ENCODE measurements at regions of chr10 and their contacts with region 1.

Region 1: DNA sequence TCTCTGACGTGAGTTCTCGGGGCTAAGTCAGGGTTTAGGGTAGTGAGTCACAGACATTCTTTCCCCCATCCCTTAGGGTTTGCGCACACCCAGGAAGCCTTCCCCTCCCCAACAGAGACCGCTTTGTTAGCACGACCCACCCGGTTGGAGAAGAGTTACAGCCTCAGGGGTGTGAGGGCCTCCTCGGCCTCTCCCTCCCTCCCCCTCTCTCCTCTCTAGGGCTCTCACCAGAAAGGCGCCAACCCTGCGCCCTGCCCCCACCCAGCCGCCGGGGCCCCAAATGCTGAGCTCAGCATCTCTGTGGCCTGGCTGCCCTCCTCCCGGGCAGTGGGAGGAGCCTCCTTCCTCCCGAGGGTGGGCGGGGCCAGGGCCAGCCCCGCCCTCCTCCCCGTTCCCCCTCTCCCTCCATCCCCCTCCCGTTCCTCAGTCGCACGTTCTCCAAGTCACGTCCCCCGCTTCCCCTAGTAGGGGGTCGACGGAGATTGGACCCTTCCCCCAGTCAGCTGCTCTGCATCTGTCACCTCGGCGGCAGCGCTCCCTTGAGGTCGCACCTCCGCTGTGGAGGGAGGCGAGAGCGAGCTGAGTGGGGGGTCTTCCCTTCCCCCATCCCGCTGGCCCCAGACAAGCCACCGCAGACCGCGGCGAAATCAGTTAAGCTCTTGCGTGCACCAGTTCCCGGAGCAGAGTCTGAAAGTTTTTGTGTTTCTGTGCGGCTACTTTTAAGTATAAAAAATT is 13.0 kb upstream of the DDIT4 start:
- DNase-seq: peak; percentile 94 to 98
- H3K4me3 ChIP-seq: peak overlapping the region; percentile 61
- H3K4me3 Mint-ChIP-seq: peak overlapping the region; percentile 91
- H3K27ac Mint-ChIP-seq: peak overlapping the region; percentile 96
- H3K4me1 ChIP-seq: peaks cover 22% of the 10 kb centered on the region
- H3K4me1 Mint-ChIP-seq: peaks cover 29% of the 10 kb centered on the region
- H3K27me3 ChIP-seq: no peaks in the 10 kb centered on the region
- H3K27me3 Mint-ChIP-seq: no peaks in the 10 kb centered on the region
- CTCF ChIP-seq: peak in 1 of 2 experiments; percentile 31

Region 2: DNA sequence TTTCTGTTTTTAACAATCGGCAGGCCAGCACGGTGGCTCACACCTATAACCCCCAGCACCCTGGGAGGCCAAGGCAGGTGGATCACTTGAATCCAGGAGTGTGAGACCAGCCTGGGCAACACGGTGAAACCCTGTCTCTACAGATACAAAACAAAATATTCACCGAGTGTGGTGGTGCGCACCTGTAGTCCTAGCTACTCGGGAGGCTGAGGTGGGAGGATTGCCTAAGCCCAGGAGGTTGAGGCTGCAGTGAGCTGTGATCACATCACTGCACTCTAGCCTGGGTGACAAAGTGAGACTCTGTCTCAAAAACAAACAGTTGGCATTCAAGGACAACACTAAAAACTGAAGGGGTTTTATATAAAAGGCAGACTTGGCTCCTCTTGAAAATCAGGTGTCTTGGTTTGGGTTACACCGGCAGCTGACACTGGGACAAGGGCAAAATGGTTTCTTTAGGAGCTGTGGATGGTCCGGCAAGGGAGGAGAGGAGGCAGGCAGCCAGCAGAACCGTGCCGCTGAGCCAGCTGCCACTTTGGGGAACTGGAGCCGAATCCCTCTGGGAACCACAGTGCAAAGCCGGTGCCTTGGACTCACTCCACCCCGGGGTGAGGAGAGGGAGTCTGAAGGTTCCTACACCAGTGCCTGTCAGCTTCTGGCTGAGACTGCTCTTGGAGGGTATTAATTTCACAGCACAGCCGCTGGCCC is 244.0 kb before region 1 on chr10:
- CTCF ChIA-PET with region 1: no interaction called
- POLR2A ChIA-PET with region 1: no interaction called
- intact Hi-C with region 1: no loop called
- DNase-seq: no peak
- H3K4me3 ChIP-seq: no peak overlapping the region
- H3K4me3 Mint-ChIP-seq: no peak overlapping the region
- H3K27ac Mint-ChIP-seq: peak overlapping the region; percentile 34
- H3K4me1 ChIP-seq: peaks cover 30% of the 10 kb centered on the region
- H3K4me1 Mint-ChIP-seq: peaks cover 35% of the 10 kb centered on the region
- H3K27me3 ChIP-seq: no peaks in the 10 kb centered on the region
- H3K27me3 Mint-ChIP-seq: no peaks in the 10 kb centered on the region
- CTCF ChIP-seq: no peak

Region 3: GRCh38 chr10:72162978-72163377 is 97.8 kb before region 1 on chr10:
- CTCF ChIA-PET with region 1: no interaction called
- POLR2A ChIA-PET with region 1: interaction called, 10 read pairs
- intact Hi-C with region 1: no loop called
- DNase-seq: no peak
- H3K4me3 ChIP-seq: no peak overlapping the region
- H3K4me3 Mint-ChIP-seq: no peak overlapping the region
- H3K27ac Mint-ChIP-seq: no peak overlapping the region
- H3K4me1 ChIP-seq: peaks cover 11% of the 10 kb centered on the region
- H3K4me1 Mint-ChIP-seq: peaks cover 11% of the 10 kb centered on the region
- H3K27me3 ChIP-seq: no peaks in the 10 kb centered on the region
- H3K27me3 Mint-ChIP-seq: no peaks in the 10 kb centered on the region
- CTCF ChIP-seq: no peak

Region 4: GRCh38 chr10:72173635-72174296 is 87.0 kb before region 1 on chr10:
- CTCF ChIA-PET with region 1: no interaction called
- POLR2A ChIA-PET with region 1: no interaction called
- intact Hi-C with region 1: loop called (anchors 5 kb)
- DNase-seq: no peak
- H3K4me3 ChIP-seq: no peak overlapping the region
- H3K4me3 Mint-ChIP-seq: no peak overlapping the region
- H3K27ac Mint-ChIP-seq: no peak overlapping the region
- H3K4me1 ChIP-seq: peaks cover 24% of the 10 kb centered on the region
- H3K4me1 Mint-ChIP-seq: peaks cover 19% of the 10 kb centered on the region
- H3K27me3 ChIP-seq: no peaks in the 10 kb centered on the region
- H3K27me3 Mint-ChIP-seq: no peaks in the 10 kb centered on the region
- CTCF ChIP-seq: no peak

Region 5: GRCh38 chr10:72229261-72230251 is 31.2 kb before region 1 on chr10:
- CTCF ChIA-PET with region 1: interaction called, 5 read pairs
- POLR2A ChIA-PET with region 1: interaction called, 4 read pairs
- intact Hi-C with region 1: loop called (anchors 2 kb)
- DNase-seq: no peak
- H3K4me3 ChIP-seq: no peak overlapping the region
- H3K4me3 Mint-ChIP-seq: no peak overlapping the region
- H3K27ac Mint-ChIP-seq: no peak overlapping the region
- H3K4me1 ChIP-seq: no peaks in the 10 kb centered on the region
- H3K4me1 Mint-ChIP-seq: peaks cover 18% of the 10 kb centered on the region
- H3K27me3 ChIP-seq: no peaks in the 10 kb centered on the region
- H3K27me3 Mint-ChIP-seq: no peaks in the 10 kb centered on the region
- CTCF ChIP-seq: no peak

Region 6: DNA sequence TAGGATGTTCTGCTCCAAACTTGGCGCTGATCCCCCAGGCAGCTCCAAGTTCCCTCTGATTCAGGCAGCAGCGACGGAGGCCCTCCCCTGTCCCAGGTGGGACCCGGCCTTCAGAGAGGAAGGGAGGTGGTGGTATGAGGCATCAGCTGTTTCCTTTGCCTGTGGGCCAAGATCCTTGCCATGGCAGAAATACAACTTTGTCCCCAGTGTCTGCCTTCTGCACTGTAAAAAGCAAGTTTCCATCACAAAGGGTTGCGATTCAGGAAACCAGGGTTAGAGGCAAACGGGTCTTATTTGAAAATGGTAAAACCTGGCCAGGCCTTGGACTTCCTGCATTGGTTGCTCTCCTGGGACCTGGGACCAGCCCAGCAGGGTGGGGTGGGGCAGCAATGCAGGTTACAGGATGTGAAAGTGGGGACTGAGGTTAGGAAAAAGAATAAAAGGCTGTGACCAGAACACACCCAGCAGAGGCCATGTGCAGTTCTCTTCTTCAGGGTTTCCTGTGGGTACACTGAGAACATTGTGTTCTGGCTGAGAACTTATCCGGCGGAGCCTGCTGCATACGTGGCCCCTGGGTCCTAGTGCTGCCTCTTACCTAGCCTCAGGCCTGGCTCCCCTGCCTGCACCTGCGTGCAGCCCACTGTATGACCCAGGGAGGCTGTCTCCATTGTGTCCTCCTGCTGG is 12.1 kb before region 1 on chr10:
- CTCF ChIA-PET with region 1: no interaction called
- POLR2A ChIA-PET with region 1: interaction called, 14 read pairs
- intact Hi-C with region 1: loop called (anchors 1 kb)
- DNase-seq: no peak
- H3K4me3 ChIP-seq: no peak overlapping the region
- H3K4me3 Mint-ChIP-seq: no peak overlapping the region
- H3K27ac Mint-ChIP-seq: no peak overlapping the region
- H3K4me1 ChIP-seq: peaks cover 26% of the 10 kb centered on the region
- H3K4me1 Mint-ChIP-seq: peaks cover 14% of the 10 kb centered on the region
- H3K27me3 ChIP-seq: no peaks in the 10 kb centered on the region
- H3K27me3 Mint-ChIP-seq: no peaks in the 10 kb centered on the region
- CTCF ChIP-seq: no peak

Region 7: GRCh38 chr10:72297968-72298773 is 37.4 kb after region 1 on chr10:
- CTCF ChIA-PET with region 1: no interaction called
- POLR2A ChIA-PET with region 1: interaction called, 7 read pairs
- intact Hi-C with region 1: loop called (anchors 1 kb)
- DNase-seq: peak; percentile 99
- H3K4me3 ChIP-seq: peak overlapping the region; percentile 55
- H3K4me3 Mint-ChIP-seq: peak overlapping the region; percentile 86
- H3K27ac Mint-ChIP-seq: peak overlapping the region; percentile 99
- H3K4me1 ChIP-seq: peaks cover 20% of the 10 kb centered on the region
- H3K4me1 Mint-ChIP-seq: peaks cover 20% of the 10 kb centered on the region
- H3K27me3 ChIP-seq: no peaks in the 10 kb centered on the region
- H3K27me3 Mint-ChIP-seq: no peaks in the 10 kb centered on the region
- CTCF ChIP-seq: no peak